ENCODE measurements at regions of chr1 and their contacts with region 1.

Region 1: GRCh38 chr1:181142096-181142958 is 53.8 kb downstream of the IER5 start:
- DNase-seq: peak; percentile 85
- H3K4me3 ChIP-seq: peak overlapping the region in 1 of 3 experiments; percentile 4
- H3K27ac ChIP-seq: peak overlapping the region; percentile 20
- H3K4me1 ChIP-seq: peaks cover 23% of the 10 kb centered on the region
- H3K27me3 ChIP-seq: peaks cover 0 to 9% of the 10 kb centered on the region in 2 experiments
- CTCF ChIP-seq: peak; percentile 94 to 96
- POLR2A ChIP-seq: no peak

Region 2: GRCh38 chr1:180003026-180003695 is 1139.2 kb before region 1 on chr1:
- CTCF ChIA-PET with region 1: no interaction called
- POLR2A ChIA-PET with region 1: no interaction called
- dilution Hi-C with region 1: no loop called
- intact Hi-C with region 1: no loop called
- DNase-seq: no peak
- H3K4me3 ChIP-seq: no peak overlapping the region
- H3K27ac ChIP-seq: no peak overlapping the region
- H3K4me1 ChIP-seq: no peaks in the 10 kb centered on the region
- H3K27me3 ChIP-seq: no peaks in the 10 kb centered on the region
- CTCF ChIP-seq: no peak
- POLR2A ChIP-seq: no peak

Region 3: GRCh38 chr1:180652792-180653191 is 489.5 kb before region 1 on chr1:
- CTCF ChIA-PET with region 1: no interaction called
- POLR2A ChIA-PET with region 1: no interaction called
- dilution Hi-C with region 1: no loop called
- intact Hi-C with region 1: no loop called
- DNase-seq: no peak
- H3K4me3 ChIP-seq: no peak overlapping the region
- H3K27ac ChIP-seq: no peak overlapping the region
- H3K4me1 ChIP-seq: no peaks in the 10 kb centered on the region
- H3K27me3 ChIP-seq: no peaks in the 10 kb centered on the region
- CTCF ChIP-seq: no peak
- POLR2A ChIP-seq: no peak

Region 4: GRCh38 chr1:180842052-180842451 is 300.3 kb before region 1 on chr1:
- CTCF ChIA-PET with region 1: no interaction called
- POLR2A ChIA-PET with region 1: no interaction called
- dilution Hi-C with region 1: no loop called
- intact Hi-C with region 1: no loop called
- DNase-seq: no peak
- H3K4me3 ChIP-seq: no peak overlapping the region
- H3K27ac ChIP-seq: no peak overlapping the region
- H3K4me1 ChIP-seq: no peaks in the 10 kb centered on the region
- H3K27me3 ChIP-seq: no peaks in the 10 kb centered on the region
- CTCF ChIP-seq: no peak
- POLR2A ChIP-seq: no peak

Region 5: GRCh38 chr1:180954005-180954800 is 188.1 kb before region 1 on chr1:
- CTCF ChIA-PET with region 1: interaction called, 4 read pairs
- POLR2A ChIA-PET with region 1: no interaction called
- dilution Hi-C with region 1: no loop called
- intact Hi-C with region 1: loop called (anchors 5 kb)
- DNase-seq: peak; percentile 69
- H3K4me3 ChIP-seq: peak overlapping the region; percentile 30 to 51 (median 40)
- H3K27ac ChIP-seq: no peak overlapping the region
- H3K4me1 ChIP-seq: peaks cover 6% of the 10 kb centered on the region
- H3K27me3 ChIP-seq: no peaks in the 10 kb centered on the region
- CTCF ChIP-seq: no peak
- POLR2A ChIP-seq: no peak

Region 6: GRCh38 chr1:181033799-181034451 is 108.4 kb before region 1 on chr1 and contains the start of gene MR1:
- CTCF ChIA-PET with region 1: interaction called, 174 read pairs
- POLR2A ChIA-PET with region 1: no interaction called
- dilution Hi-C with region 1: no loop called
- intact Hi-C with region 1: loop called (anchors 1 kb)
- DNase-seq: peak; percentile 91
- H3K4me3 ChIP-seq: peak within 1 kb of the TSS in 2 of 3 experiments; percentile 1 to 43
- H3K27ac ChIP-seq: peak within 1 kb of the TSS; percentile 18
- H3K4me1 ChIP-seq: peaks cover 10% of the 10 kb centered on the region
- H3K27me3 ChIP-seq: no peaks in the 10 kb centered on the region
- CTCF ChIP-seq: no peak
- POLR2A ChIP-seq: no peak
- total RNA-seq, gene MR1: 1.1 and 1.3 TPM in 2 replicates

Region 7: GRCh38 chr1:181099152-181100014 is 42.9 kb before region 1 on chr1:
- CTCF ChIA-PET with region 1: interaction called, 42 read pairs
- POLR2A ChIA-PET with region 1: interaction called, 3 read pairs
- dilution Hi-C with region 1: no loop called
- intact Hi-C with region 1: loop called (anchors 2 kb)
- DNase-seq: peak; percentile 60
- H3K4me3 ChIP-seq: no peak overlapping the region
- H3K27ac ChIP-seq: peak overlapping the region; percentile 19
- H3K4me1 ChIP-seq: peaks cover 47% of the 10 kb centered on the region
- H3K27me3 ChIP-seq: no peaks in the 10 kb centered on the region
- CTCF ChIP-seq: no peak
- POLR2A ChIP-seq: no peak

Region 8: DNA sequence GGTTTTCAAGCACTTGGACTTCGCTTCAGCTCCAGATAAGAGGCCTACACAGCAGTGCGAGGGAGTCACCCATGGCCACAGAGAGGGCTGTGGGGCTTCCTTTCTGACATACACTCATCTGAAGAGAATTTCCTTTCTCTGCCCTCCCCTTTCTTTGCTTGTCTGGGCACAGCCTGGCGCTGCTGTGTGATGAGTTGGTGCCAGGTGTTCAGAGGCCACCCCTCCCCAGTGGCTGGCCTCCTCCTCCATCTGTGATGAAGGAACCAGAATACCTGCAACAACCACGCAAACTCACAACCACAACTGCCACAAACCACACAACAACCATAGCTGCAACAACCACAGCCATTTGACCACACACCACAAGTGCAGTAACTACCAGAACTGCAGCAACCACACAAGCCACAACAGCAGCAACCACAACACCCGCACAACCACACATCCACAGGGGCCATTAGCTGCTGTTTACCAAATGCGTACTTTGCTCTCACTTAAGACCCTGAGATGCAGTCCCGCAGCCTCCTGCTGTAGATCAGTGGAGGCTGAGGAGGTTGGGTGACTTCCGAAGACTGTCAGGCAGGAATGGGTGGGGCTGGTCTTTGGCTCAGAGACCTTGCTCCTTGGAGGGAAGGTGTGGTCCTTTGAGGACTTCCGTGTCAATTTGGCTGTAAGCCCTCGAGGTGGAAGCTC is 17.3 kb after region 1 on chr1:
- CTCF ChIA-PET with region 1: interaction called, 40 read pairs
- POLR2A ChIA-PET with region 1: no interaction called
- dilution Hi-C with region 1: no loop called
- intact Hi-C with region 1: no loop called
- DNase-seq: peak; percentile 78
- H3K4me3 ChIP-seq: no peak overlapping the region
- H3K27ac ChIP-seq: no peak overlapping the region
- H3K4me1 ChIP-seq: peaks cover 14% of the 10 kb centered on the region
- H3K27me3 ChIP-seq: no peaks in the 10 kb centered on the region
- CTCF ChIP-seq: no peak
- POLR2A ChIP-seq: no peak

Measured in endothelial cell of umbilical vein (primary cell).